AG04449 (cell line): ENCODE measurements at regions of chr3 and their contacts with region 1.

Region 1: GRCh38 chr3:184354121-184354728 is 7.2 kb downstream of the CLCN2 start:
- DNase-seq: no peak
- H3K4me3 ChIP-seq: no peak overlapping the region
- CTCF ChIP-seq: peak; percentile 77

Region 2: DNA sequence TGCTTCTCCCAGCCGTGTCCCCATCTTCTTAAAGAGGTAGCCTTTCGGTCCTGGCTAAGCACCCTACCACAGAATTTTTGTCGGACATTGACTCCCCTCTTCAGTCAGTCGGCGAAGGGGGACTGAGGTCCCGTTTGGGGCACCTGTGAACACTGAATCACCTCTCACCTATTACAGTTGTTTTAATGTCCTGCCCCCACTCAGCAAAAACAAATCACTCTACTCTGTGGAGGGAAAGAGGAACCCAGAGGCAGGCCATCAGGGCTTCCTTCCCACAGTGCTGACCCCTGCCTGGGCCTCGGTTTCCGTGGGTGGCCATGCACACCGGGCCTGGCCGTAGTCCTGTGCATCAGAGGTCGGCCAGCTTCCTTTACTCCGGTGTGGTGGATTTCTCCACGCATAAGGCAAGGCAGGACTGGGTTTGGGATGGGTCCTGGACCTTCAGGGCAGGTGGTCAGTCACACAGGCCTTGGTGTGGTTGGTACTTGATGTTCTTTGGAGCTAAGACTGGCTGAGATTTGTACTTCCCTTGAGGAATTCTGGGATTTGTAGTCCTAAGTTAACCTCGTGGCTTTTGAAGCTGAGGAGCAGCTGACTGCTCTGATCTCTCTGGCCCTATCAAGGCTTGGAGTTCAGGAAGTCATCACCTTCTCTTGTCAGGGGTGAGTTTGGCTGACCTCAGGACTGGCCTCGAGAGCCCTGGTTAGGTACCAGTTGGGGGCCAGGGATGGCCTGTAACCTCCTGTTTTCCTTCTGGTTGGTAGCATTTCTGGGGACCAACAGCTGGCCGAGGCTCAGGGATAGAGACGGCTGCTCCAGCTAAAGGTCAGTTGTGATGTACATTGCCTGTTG is 17.5 kb before region 1 on chr3:
- CTCF ChIA-PET with region 1: interaction called, 40 read pairs
- POLR2A ChIA-PET with region 1: no interaction called
- DNase-seq: no peak
- H3K4me3 ChIP-seq: peak overlapping the region; percentile 72
- CTCF ChIP-seq: no peak

Region 3: GRCh38 chr3:184491867-184492615 is 137.8 kb after region 1 on chr3:
- CTCF ChIA-PET with region 1: no interaction called
- POLR2A ChIA-PET with region 1: no interaction called
- DNase-seq: no peak
- H3K4me3 ChIP-seq: no peak overlapping the region
- CTCF ChIP-seq: no peak